ENCODE measurements at regions of chrX and their contacts with region 1.

Region 1: DNA sequence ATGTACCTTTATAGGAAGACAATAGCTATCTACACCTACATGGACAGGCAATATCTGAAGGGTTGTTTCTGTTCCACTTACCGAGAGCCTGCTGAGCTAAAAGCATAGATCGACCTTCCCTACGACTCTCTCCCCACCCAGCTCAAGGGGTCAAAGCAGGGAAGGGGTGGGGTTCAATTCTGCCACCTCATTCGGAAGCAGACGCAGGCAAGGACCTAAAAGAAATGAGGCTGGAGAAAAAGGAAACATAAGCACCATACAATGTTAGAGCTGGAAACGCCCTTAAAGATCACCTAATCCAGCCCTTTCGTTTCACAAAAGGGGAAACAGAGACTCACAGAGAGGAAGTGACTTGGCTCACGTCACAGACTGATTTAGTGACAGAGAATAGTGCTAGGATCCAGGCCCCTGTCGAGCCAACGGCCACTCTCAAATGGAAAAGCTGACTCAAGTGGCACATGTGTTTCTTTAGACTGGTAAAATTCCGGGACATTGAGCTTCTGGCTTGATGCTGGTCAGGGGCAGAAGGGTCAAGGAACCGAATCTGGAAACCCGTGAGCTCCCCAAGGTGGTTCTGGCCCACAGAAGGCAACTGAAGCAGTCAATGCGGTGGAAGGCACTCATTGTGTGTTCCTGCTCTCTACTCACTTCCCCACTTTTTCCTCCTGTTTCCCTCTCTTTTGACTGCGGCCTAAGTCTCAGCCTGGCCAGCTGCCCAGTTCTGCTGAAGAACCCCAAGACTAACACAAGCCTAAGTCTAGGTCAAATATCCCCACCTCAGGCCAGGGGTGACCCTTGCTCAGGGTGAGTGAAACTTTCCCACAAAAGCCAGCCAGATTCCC is 7.5 kb downstream of the SEPTIN6 start:
- DNase-seq: peak; percentile 76
- ATAC-seq: peak; percentile 49
- H3K4me3 Mint-ChIP-seq: peak overlapping the region; percentile 96
- H3K27ac Mint-ChIP-seq: peak overlapping the region; percentile 99
- H3K4me1 Mint-ChIP-seq: peaks cover 56% of the 10 kb centered on the region
- H3K27me3 Mint-ChIP-seq: no peaks in the 10 kb centered on the region
- CTCF ChIP-seq: no peak

Region 2: GRCh38 chrX:119130911-119131310 is 554.5 kb before region 1 on chrX:
- CTCF ChIA-PET with region 1: no interaction called
- POLR2A ChIA-PET with region 1: no interaction called
- intact Hi-C with region 1: no loop called
- DNase-seq: no peak
- ATAC-seq: no peak
- H3K4me3 Mint-ChIP-seq: no peak overlapping the region
- H3K27ac Mint-ChIP-seq: no peak overlapping the region
- H3K4me1 Mint-ChIP-seq: no peaks in the 10 kb centered on the region
- H3K27me3 Mint-ChIP-seq: peaks cover 3% of the 10 kb centered on the region
- CTCF ChIP-seq: no peak

Region 3: GRCh38 chrX:119647552-119648420 is 37.7 kb before region 1 on chrX:
- CTCF ChIA-PET with region 1: no interaction called
- POLR2A ChIA-PET with region 1: interaction called, 11 read pairs
- intact Hi-C with region 1: loop called (anchors 5 kb)
- DNase-seq: peak; percentile 83
- ATAC-seq: peak; percentile 95
- H3K4me3 Mint-ChIP-seq: no peak overlapping the region
- H3K27ac Mint-ChIP-seq: peak overlapping the region; percentile 93
- H3K4me1 Mint-ChIP-seq: peaks cover 36% of the 10 kb centered on the region
- H3K27me3 Mint-ChIP-seq: no peaks in the 10 kb centered on the region
- CTCF ChIP-seq: no peak

Region 4: DNA sequence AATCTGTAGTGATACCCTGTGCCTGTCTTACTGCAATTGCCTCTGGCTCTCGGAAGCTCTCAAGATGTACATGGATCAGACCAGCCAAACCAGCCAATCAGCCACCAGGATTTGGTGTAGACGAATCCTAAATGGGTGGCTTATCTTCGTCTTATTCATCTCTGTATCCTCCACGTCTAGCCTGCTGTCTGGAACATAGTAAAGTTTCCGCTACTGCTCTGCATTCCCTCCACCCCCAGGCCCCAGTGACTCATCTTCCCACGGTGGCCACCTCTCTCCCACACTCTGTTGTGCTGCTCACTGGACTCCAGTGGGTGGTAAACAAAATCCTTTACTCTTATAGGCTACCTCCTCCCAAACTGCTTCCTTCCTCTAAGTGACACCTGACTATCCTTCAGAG is 30.3 kb before region 1 on chrX:
- CTCF ChIA-PET with region 1: interaction called, 3 read pairs
- POLR2A ChIA-PET with region 1: interaction called, 11 read pairs
- intact Hi-C with region 1: no loop called
- DNase-seq: peak; percentile 75
- ATAC-seq: peak; percentile 80
- H3K4me3 Mint-ChIP-seq: peak overlapping the region; percentile 28
- H3K27ac Mint-ChIP-seq: peak overlapping the region; percentile 68
- H3K4me1 Mint-ChIP-seq: peaks cover 41% of the 10 kb centered on the region
- H3K27me3 Mint-ChIP-seq: no peaks in the 10 kb centered on the region
- CTCF ChIP-seq: no peak

Region 5: GRCh38 chrX:119738742-119739141 is 53.3 kb after region 1 on chrX:
- CTCF ChIA-PET with region 1: no interaction called
- POLR2A ChIA-PET with region 1: no interaction called
- intact Hi-C with region 1: no loop called
- DNase-seq: no peak
- ATAC-seq: no peak
- H3K4me3 Mint-ChIP-seq: no peak overlapping the region
- H3K27ac Mint-ChIP-seq: no peak overlapping the region
- H3K4me1 Mint-ChIP-seq: no peaks in the 10 kb centered on the region
- H3K27me3 Mint-ChIP-seq: no peaks in the 10 kb centered on the region
- CTCF ChIP-seq: no peak